ENCODE measurements at regions of chr17 and their contacts with region 1.

Region 1: GRCh38 chr17:15185625-15185991 is 79.5 kb downstream of the PMP22 start:
- DNase-seq: peak; percentile 82
- H3K4me3 Mint-ChIP-seq: no peak overlapping the region
- H3K27ac Mint-ChIP-seq: no peak overlapping the region
- H3K4me1 Mint-ChIP-seq: peaks cover 10% of the 10 kb centered on the region
- H3K27me3 Mint-ChIP-seq: peaks cover 10% of the 10 kb centered on the region
- CTCF ChIP-seq: no peak

Region 2: GRCh38 chr17:15154618-15155017 is 31.0 kb before region 1 on chr17:
- CTCF ChIA-PET with region 1: no interaction called
- POLR2A ChIA-PET with region 1: no interaction called
- intact Hi-C with region 1: no loop called
- DNase-seq: peak; percentile 31
- H3K4me3 Mint-ChIP-seq: no peak overlapping the region
- H3K27ac Mint-ChIP-seq: no peak overlapping the region
- H3K4me1 Mint-ChIP-seq: peaks cover 18% of the 10 kb centered on the region
- H3K27me3 Mint-ChIP-seq: no peaks in the 10 kb centered on the region
- CTCF ChIP-seq: no peak

Region 3: DNA sequence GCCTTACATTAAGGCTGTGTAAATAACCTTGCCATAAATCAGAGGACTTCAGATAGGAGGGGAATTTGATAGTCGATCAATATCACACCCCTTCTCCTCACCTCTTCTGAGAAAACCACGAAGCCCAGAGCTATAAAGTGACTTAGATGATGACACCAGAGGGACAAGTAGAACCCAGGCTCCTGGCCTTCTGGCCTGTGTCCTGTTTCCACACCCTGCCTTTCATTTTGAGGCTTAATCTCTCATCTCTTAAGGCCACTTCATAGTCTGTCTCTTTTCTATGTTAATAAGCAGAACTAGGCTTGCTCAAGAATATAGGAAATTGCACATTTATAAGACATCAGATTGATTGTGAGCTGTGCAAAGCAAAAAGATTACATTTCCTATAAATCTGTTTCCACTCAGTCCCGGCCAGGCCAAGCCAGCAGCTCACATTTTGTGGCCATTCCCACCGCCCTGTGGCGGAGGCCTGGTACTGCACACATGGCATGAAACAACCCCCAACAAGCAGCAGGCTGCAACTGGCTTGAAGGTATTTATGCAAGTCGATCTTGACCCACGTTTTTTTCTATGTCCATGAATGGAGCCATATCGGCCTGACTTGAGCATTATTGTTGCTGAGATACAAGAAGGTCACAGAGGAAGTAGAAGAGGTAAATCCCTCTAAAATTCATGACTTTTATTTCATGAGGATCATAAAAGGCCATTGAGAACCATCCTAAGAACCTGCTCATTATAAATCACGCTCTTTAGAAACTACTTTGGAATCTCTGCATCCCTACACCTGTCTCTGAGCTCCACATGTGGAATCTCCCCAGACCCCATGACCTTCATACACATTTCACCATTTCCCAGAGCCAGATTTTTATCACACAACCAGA is 14.2 kb before region 1 on chr17:
- CTCF ChIA-PET with region 1: interaction called, 12 read pairs
- POLR2A ChIA-PET with region 1: interaction called, 5 read pairs
- intact Hi-C with region 1: no loop called
- DNase-seq: peak; percentile 80
- H3K4me3 Mint-ChIP-seq: no peak overlapping the region
- H3K27ac Mint-ChIP-seq: no peak overlapping the region
- H3K4me1 Mint-ChIP-seq: peaks cover 11% of the 10 kb centered on the region
- H3K27me3 Mint-ChIP-seq: peaks cover 14% of the 10 kb centered on the region
- CTCF ChIP-seq: peak; percentile 81